GM12878 (cell line): ENCODE measurements at regions of chr3 and their contacts with region 1.

Region 1: GRCh38 chr3:187164885-187165543 is 25.7 kb upstream of the RPL39L start:
- DNase-seq: no peak
- ATAC-seq: peak; percentile 76
- H3K4me3 ChIP-seq: no peak overlapping the region
- H3K27ac ChIP-seq: no peak overlapping the region
- H3K4me1 ChIP-seq: no peaks in the 10 kb centered on the region
- H3K27me3 ChIP-seq: no peaks in the 10 kb centered on the region; a peak in 1 of 4 replicates
- CTCF ChIP-seq: peak; percentile 52 to 60 (median 57); a peak in 5 of 6 replicates
- EP300 ChIP-seq: no peak
- POLR2A ChIP-seq: no peak
- RAD21 ChIP-seq: peak; percentile 74

Region 2: DNA sequence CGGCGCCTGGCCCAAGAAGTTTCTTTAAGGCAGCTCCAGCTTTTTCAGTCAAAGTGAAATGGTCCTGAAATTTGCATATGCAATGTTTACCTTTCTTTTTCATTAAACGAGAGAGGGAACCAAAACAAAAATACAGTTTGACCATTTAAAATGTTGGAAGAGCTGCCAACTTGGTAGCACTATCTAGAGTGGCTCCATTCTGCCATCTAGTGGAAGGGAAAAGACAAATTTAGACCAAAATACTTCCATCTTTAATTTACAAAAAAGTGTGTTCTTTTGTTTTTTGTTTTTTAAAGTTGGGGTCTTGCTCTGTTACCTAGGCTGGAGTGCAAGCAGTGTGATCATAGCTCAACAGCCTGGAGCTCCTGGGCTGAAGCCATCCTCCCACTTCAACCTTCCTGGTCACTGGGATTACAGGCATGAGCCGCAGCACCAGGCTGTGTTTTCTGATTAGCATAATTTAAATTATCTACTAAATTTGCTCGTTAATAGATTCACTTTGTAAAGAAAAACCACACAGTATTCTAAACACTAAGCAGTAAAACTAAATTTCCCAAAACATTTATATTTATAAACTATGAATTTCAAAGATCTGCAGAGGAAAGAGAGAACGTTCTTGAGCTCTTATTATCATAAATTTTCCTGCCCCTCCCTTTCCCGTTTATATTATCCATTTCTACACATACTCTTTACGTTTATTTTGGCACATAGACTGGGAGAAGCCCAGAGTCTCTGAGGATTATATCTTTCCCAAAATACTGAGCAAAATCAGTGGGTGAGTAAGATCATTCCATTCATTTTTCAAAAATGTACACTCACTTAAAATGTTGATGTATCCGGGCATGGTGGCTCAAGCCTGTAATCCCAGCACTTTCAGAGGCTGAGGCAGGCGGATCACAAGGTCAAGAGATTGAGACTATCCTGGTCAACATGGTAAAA is 343.3 kb before region 1 on chr3:
- CTCF ChIA-PET with region 1: interaction called, 15 read pairs
- POLR2A ChIA-PET with region 1: no interaction called
- RAD21 ChIA-PET with region 1: interaction called, 4 read pairs
- SMC1A ChIA-PET with region 1: interaction called, 5 read pairs
- in situ Hi-C with region 1: no loop called
- intact Hi-C with region 1: no loop called
- DNase-seq: no peak
- ATAC-seq: peak; percentile 52
- H3K4me3 ChIP-seq: no peak overlapping the region
- H3K27ac ChIP-seq: no peak overlapping the region
- H3K4me1 ChIP-seq: no peaks in the 10 kb centered on the region
- H3K27me3 ChIP-seq: peaks cover 5 to 18% of the 10 kb centered on the region in 2 experiments
- CTCF ChIP-seq: peak; percentile 50 to 69 (median 59)
- EP300 ChIP-seq: no peak
- POLR2A ChIP-seq: no peak
- RAD21 ChIP-seq: peak; percentile 75

Region 3: DNA sequence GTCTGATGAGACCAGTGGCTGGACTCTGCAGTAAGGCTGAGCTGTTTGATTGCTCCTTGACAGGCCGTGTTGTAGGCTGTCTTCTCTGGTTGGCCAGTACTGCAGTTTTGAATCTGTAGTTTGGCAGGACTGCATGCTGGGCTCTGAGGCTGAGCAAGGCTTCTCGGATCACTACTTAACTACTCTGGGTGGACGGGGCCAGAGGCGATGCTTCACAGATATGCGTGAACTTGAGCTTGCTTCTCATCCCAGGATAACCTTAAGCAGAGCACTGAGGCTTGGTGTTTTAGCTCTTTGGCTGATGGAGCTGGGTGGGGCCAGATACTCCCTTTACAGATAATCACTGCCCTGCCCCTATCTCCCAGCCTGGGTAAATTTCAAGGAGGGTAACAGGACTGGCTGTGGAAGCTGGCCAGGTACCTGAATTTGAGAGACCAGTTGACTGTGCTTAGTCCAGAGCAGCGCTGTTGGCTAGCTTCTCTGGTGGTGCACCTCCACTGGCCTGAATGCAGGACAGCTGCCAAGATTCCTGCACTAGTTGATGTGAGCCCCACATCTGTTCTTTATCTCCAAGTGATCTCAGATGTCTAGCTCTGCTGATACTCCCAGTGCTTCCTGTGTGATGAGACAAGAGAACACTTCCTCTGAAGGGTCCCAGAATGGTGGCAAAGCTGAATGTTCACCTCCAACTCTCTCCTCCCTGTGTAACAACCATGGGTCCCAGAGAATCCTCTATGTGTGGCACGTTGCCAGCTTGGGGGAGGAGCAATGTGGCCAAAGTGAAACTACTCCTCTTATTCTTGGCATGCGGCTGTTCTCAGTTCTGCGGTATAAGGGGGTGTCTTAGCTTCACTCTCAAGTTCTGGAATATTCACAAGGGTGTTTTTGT is 63.6 kb before region 1 on chr3:
- CTCF ChIA-PET with region 1: interaction called, 14 read pairs
- POLR2A ChIA-PET with region 1: no interaction called
- RAD21 ChIA-PET with region 1: interaction called, 5 read pairs
- SMC1A ChIA-PET with region 1: interaction called, 3 read pairs
- in situ Hi-C with region 1: no loop called
- intact Hi-C with region 1: no loop called
- DNase-seq: no peak
- ATAC-seq: peak; percentile 65
- H3K4me3 ChIP-seq: no peak overlapping the region
- H3K27ac ChIP-seq: no peak overlapping the region
- H3K4me1 ChIP-seq: 0 out of 2 replicates have a peak, but pooled peaks cover 5% of the 10 kb centered on the region
- H3K27me3 ChIP-seq: no peaks in the 10 kb centered on the region
- CTCF ChIP-seq: no peak
- EP300 ChIP-seq: no peak
- POLR2A ChIP-seq: no peak
- RAD21 ChIP-seq: no peak

Region 4: GRCh38 chr3:187120326-187120725 is 44.7 kb before region 1 on chr3:
- CTCF ChIA-PET with region 1: interaction called, 197 read pairs
- POLR2A ChIA-PET with region 1: interaction called, 3 read pairs
- RAD21 ChIA-PET with region 1: interaction called, 5 read pairs
- SMC1A ChIA-PET with region 1: interaction called, 111 read pairs
- in situ Hi-C with region 1: no loop called
- intact Hi-C with region 1: no loop called
- DNase-seq: no peak
- ATAC-seq: peak; percentile 45
- H3K4me3 ChIP-seq: no peak overlapping the region
- H3K27ac ChIP-seq: no peak overlapping the region
- H3K4me1 ChIP-seq: peaks cover 6% of the 10 kb centered on the region; the same call in 1 of the 2 replicates
- H3K27me3 ChIP-seq: no peaks in the 10 kb centered on the region
- CTCF ChIP-seq: no peak
- EP300 ChIP-seq: no peak
- POLR2A ChIP-seq: no peak
- RAD21 ChIP-seq: no peak

Region 5: GRCh38 chr3:187139126-187139894 is 25.7 kb before region 1 on chr3 and contains the start of gene RPL39L:
- CTCF ChIA-PET with region 1: interaction called, 25 read pairs
- POLR2A ChIA-PET with region 1: no interaction called
- RAD21 ChIA-PET with region 1: interaction called, 15 read pairs
- SMC1A ChIA-PET with region 1: interaction called, 8 read pairs
- in situ Hi-C with region 1: no loop called
- intact Hi-C with region 1: no loop called
- DNase-seq: peak; percentile 64
- ATAC-seq: peak; percentile 99
- H3K4me3 ChIP-seq: peak within 1 kb of the TSS; percentile 63
- H3K27ac ChIP-seq: peak within 1 kb of the TSS; percentile 92
- H3K4me1 ChIP-seq: peaks cover 7% of the 10 kb centered on the region; the same call in 1 of the 2 replicates
- H3K27me3 ChIP-seq: no peaks in the 10 kb centered on the region
- CTCF ChIP-seq: peak; percentile 80 to 86 (median 84)
- EP300 ChIP-seq: no peak
- POLR2A ChIP-seq: peak; percentile 96
- RAD21 ChIP-seq: no peak
- polyA plus RNA-seq, gene RPL39L: 12.5 to 33.7 TPM

Region 6: GRCh38 chr3:187745201-187746058 is 580.4 kb after region 1 on chr3 and contains the start of gene BCL6:
- CTCF ChIA-PET with region 1: no interaction called
- POLR2A ChIA-PET with region 1: no interaction called
- RAD21 ChIA-PET with region 1: no interaction called
- SMC1A ChIA-PET with region 1: no interaction called
- in situ Hi-C with region 1: no loop called
- intact Hi-C with region 1: no loop called
- DNase-seq: no peak
- ATAC-seq: peak; percentile 63
- H3K4me3 ChIP-seq: peak within 1 kb of the TSS; percentile 65; the same call in 1 of the 2 replicates
- H3K27ac ChIP-seq: no peak within 1 kb of the TSS
- H3K4me1 ChIP-seq: peaks cover 7% of the 10 kb centered on the region
- H3K27me3 ChIP-seq: peaks cover 14 to 21% of the 10 kb centered on the region in 2 experiments
- CTCF ChIP-seq: no peak
- EP300 ChIP-seq: no peak
- POLR2A ChIP-seq: 0 out of 2 replicates have a peak, but pooled peaks have one; percentile 16
- RAD21 ChIP-seq: no peak
- polyA plus RNA-seq, gene BCL6: 0.04 to 0.06 TPM